Left lung (tissue), 14 donors: ENCODE measurements at regions of chr11 and their contacts with region 1.

Region 1: GRCh38 chr11:6705905-6706535 is 22.9 kb upstream of the MRPL17 start:
- DNase-seq: peak in 2 of 4 donors; percentile 45 to 64
- ATAC-seq: peak; percentile 86
- H3K4me3 ChIP-seq: no peak overlapping the region
- H3K27ac ChIP-seq: peak overlapping the region; percentile 13 to 15
- H3K4me1 ChIP-seq: peaks cover 0 to 11% of the 10 kb centered on the region in 2 donors
- H3K27me3 ChIP-seq: no peaks in the 10 kb centered on the region
- CTCF ChIP-seq: peak; percentile 89 to 92

Region 2: GRCh38 chr11:6531267-6531752 is 174.7 kb before region 1 on chr11:
- intact Hi-C with region 1: loop called in 1 of 2 experiments (anchors 5 kb)
- DNase-seq: peak in 2 of 4 donors; percentile 43 to 66
- ATAC-seq: peak; percentile 89
- H3K4me3 ChIP-seq: no peak overlapping the region
- H3K27ac ChIP-seq: no peak overlapping the region
- H3K4me1 ChIP-seq: no peaks in the 10 kb centered on the region
- H3K27me3 ChIP-seq: no peaks in the 10 kb centered on the region
- CTCF ChIP-seq: peak; percentile 65 to 70

Region 3: GRCh38 chr11:6757373-6757967 is 51.5 kb after region 1 on chr11:
- intact Hi-C with region 1: loop called in 1 of 2 experiments (anchors 10 kb)
- DNase-seq: peak in 3 of 4 donors; percentile 32 to 68 (median 35)
- ATAC-seq: peak; percentile 87
- H3K4me3 ChIP-seq: no peak overlapping the region
- H3K27ac ChIP-seq: no peak overlapping the region
- H3K4me1 ChIP-seq: no peaks in the 10 kb centered on the region
- H3K27me3 ChIP-seq: no peaks in the 10 kb centered on the region
- CTCF ChIP-seq: peak; percentile 43